GM12878 (cell line): ENCODE measurements at regions of chr18 and their contacts with region 1.

Region 1: DNA sequence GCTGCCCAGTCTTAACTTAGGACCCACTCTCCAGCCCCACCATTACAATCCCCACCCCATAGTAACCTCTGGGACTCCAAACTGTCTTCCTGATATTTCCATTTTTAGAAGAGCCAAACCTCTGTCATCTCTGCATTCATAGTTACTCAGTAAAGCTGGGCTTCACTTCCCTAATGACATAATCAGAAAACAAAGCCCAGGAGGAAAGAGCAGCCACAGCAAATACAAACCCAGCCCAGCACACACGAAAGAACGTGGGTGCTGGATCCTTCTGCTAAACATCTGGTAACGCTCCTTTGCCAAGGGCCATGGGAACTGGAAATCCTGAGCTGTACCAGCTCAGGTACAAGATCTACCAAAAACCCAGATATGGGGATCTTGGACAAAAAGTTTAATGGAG is 36.8 kb upstream of the RIOK3 start:
- DNase-seq: no peak
- ATAC-seq: peak; percentile 29; the same call in 2 of the 3 replicates
- H3K4me3 ChIP-seq: no peak overlapping the region
- H3K27ac ChIP-seq: no peak overlapping the region
- H3K4me1 ChIP-seq: no peaks in the 10 kb centered on the region; the same call in 1 of the 2 replicates
- H3K27me3 ChIP-seq: no peaks in the 10 kb centered on the region
- CTCF ChIP-seq: no peak
- EP300 ChIP-seq: no peak
- POLR2A ChIP-seq: no peak
- RAD21 ChIP-seq: no peak

Region 2: GRCh38 chr18:22800551-22800951 is 615.7 kb before region 1 on chr18:
- CTCF ChIA-PET with region 1: interaction called, 14 read pairs
- POLR2A ChIA-PET with region 1: no interaction called
- RAD21 ChIA-PET with region 1: interaction called, 17 read pairs
- SMC1A ChIA-PET with region 1: interaction called, 17 read pairs
- in situ Hi-C with region 1: no loop called
- intact Hi-C with region 1: loop called (anchors 5 kb)
- DNase-seq: no peak
- ATAC-seq: no peak
- H3K4me3 ChIP-seq: no peak overlapping the region
- H3K27ac ChIP-seq: no peak overlapping the region
- H3K4me1 ChIP-seq: no peaks in the 10 kb centered on the region; the same call in 1 of the 2 replicates
- H3K27me3 ChIP-seq: no peaks in the 10 kb centered on the region
- CTCF ChIP-seq: no peak
- EP300 ChIP-seq: no peak
- POLR2A ChIP-seq: no peak
- RAD21 ChIP-seq: no peak

Region 3: DNA sequence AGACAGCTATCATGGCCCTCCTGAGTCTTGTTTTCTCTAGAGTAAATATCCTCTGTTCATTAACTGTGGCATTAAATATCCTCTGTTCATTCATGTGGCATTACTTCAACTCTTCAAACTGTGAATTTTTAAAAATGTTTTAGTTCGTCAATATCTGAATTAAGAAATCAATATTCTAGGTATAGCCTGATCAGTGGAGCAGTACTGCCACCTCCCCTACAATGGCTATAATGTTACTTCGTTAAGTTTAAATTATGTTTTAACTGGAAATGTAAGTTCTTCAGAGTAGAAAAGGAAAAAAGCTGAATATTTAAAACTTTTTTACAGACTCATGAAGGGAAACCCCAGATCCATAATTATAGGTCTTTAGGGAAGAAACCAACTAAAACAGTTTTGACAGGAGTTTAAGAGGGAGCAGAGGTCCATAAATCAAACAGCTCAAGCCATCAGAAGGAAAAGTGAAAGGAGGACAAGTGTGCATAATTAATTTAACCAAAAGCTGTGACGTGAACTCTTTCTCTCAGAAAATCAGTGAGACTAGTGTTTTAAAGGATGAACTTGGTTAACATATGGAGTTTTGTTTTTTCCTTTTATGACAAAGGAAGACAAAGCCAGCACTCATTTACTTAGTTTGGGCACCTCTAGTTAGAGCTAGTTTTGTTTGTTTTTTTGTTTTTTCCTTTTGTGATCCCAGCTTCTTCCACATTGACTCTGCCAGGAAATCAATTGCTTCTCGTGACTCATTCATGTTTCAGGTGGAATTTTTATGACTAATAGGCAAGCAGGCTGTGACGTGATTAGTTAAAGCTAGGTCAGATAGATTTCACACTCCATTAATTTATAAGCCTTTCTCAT is 438.2 kb before region 1 on chr18:
- CTCF ChIA-PET with region 1: interaction called, 12 read pairs
- POLR2A ChIA-PET with region 1: no interaction called
- RAD21 ChIA-PET with region 1: interaction called, 3 read pairs
- SMC1A ChIA-PET with region 1: interaction called, 3 read pairs
- in situ Hi-C with region 1: no loop called
- intact Hi-C with region 1: no loop called
- DNase-seq: no peak
- ATAC-seq: peak; percentile 82
- H3K4me3 ChIP-seq: no peak overlapping the region
- H3K27ac ChIP-seq: peak overlapping the region; percentile 37; the same call in 1 of the 2 replicates
- H3K4me1 ChIP-seq: no peaks in the 10 kb centered on the region
- H3K27me3 ChIP-seq: no peaks in the 10 kb centered on the region
- CTCF ChIP-seq: no peak; a peak in 1 of 6 replicates
- EP300 ChIP-seq: no peak
- POLR2A ChIP-seq: no peak
- RAD21 ChIP-seq: peak; percentile 5; the same call in 1 of the 2 replicates

Region 4: DNA sequence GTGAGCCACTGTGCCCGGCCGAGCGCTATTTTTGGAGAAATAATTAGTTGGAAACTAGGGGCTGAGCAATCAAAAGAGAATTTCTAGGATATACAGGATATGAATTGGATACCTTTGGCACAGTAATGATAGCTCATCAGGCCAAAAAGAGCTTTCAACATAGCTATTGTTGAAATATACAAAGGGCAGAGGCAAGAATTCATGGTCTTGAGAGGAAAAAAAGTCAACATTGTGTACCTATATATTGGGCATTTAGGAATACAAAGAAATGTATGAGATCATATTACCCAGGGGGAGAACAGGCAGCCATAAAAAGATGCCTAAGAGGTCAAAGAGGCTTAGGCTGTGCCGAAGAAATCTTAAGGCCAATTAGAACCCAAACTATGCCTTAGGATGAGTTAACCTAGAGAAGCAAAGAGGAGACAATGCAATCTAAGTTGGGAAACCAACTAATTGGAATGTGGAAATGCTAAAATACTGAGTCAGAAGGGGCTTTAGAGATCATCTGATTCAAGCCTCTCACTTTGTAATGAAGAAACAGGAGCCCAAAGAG is 384.2 kb before region 1 on chr18:
- CTCF ChIA-PET with region 1: interaction called, 14 read pairs
- POLR2A ChIA-PET with region 1: no interaction called
- RAD21 ChIA-PET with region 1: interaction called, 4 read pairs
- SMC1A ChIA-PET with region 1: interaction called, 12 read pairs
- in situ Hi-C with region 1: no loop called
- intact Hi-C with region 1: loop called (anchors 5 kb)
- DNase-seq: no peak
- ATAC-seq: no peak
- H3K4me3 ChIP-seq: no peak overlapping the region
- H3K27ac ChIP-seq: no peak overlapping the region
- H3K4me1 ChIP-seq: no peaks in the 10 kb centered on the region
- H3K27me3 ChIP-seq: no peaks in the 10 kb centered on the region
- CTCF ChIP-seq: no peak
- EP300 ChIP-seq: no peak
- POLR2A ChIP-seq: no peak
- RAD21 ChIP-seq: no peak

Region 5: DNA sequence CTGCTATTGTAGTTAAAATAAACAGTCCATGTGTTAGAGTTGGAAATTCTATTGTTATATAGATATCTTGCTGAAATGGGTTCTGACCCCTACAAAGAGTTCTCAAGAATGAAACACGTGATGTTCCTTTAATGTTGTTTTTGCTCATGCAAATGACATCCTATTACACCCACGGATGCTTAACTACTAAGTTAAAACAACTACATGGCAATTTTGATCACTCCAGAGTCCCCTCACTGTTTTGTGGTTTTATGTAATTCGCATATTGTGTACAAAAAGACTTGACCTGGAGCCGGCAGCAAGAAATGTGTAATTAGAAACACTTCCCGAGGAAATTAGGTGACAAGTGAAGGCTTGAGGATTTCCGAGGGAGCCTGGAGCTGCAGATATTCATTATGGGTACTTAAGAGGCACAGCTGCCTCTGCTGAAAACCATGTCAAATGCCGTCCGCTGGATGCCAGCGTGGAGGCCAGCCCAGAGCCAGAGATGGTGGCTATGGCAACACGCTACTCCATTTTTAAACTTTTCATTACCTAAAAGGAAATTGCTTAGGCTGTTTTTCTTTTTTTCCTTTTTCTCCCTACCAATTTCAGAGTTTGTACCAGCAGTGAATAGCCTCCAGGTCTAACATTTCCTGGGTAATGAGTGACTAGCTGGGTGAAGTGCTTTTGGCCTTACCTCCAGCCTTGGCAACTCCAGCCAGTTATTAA is 302.0 kb before region 1 on chr18:
- CTCF ChIA-PET with region 1: no interaction called
- POLR2A ChIA-PET with region 1: no interaction called
- RAD21 ChIA-PET with region 1: no interaction called
- SMC1A ChIA-PET with region 1: no interaction called
- in situ Hi-C with region 1: no loop called
- intact Hi-C with region 1: no loop called
- DNase-seq: no peak
- ATAC-seq: no peak
- H3K4me3 ChIP-seq: no peak overlapping the region
- H3K27ac ChIP-seq: no peak overlapping the region
- H3K4me1 ChIP-seq: no peaks in the 10 kb centered on the region
- H3K27me3 ChIP-seq: no peaks in the 10 kb centered on the region; a peak in 1 of 4 replicates
- CTCF ChIP-seq: no peak
- EP300 ChIP-seq: no peak
- POLR2A ChIP-seq: no peak
- RAD21 ChIP-seq: no peak

Region 6: DNA sequence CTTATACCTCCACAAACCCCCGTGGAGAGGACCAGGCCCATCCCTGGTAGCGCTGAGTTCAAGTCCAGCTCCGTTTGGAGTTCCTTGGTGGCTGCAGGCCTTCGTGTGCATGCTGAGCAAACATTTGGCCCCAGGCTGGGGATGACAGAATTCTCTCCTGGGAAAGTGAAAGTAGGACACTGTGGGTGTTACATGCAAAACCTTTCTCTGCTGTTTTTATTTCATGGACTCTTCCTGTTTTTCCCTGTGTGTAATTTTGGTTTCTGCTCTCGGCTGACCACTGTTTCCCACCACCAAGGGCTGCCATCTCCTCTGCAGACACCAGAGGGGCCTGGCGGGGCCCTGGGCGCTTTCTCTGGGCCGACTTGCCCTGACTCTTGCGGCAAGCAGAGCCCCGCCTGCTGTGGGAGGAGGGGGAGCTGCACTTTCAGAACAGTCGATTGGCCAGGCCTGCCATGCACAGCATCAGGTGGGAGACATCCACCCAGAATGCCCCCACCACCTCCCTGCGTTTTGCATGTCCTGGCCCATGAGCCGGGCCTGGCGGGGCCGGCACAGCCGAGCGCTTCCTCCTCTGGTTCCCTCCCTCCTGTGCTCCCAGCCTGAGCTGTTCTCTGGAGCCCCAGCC is 178.7 kb before region 1 on chr18:
- CTCF ChIA-PET with region 1: interaction called, 8 read pairs
- POLR2A ChIA-PET with region 1: no interaction called
- RAD21 ChIA-PET with region 1: interaction called, 4 read pairs
- SMC1A ChIA-PET with region 1: interaction called, 3 read pairs
- in situ Hi-C with region 1: no loop called
- intact Hi-C with region 1: loop called (anchors 5 kb)
- DNase-seq: peak; percentile 81
- ATAC-seq: peak; percentile 86
- H3K4me3 ChIP-seq: no peak overlapping the region
- H3K27ac ChIP-seq: peak overlapping the region; percentile 76
- H3K4me1 ChIP-seq: peaks cover 50% of the 10 kb centered on the region
- H3K27me3 ChIP-seq: no peaks in the 10 kb centered on the region
- CTCF ChIP-seq: peak; percentile 21 to 55 (median 45); a peak in 4 of 6 replicates
- EP300 ChIP-seq: peak; percentile 56 to 87; a peak in 3 of 4 replicates
- POLR2A ChIP-seq: no peak
- RAD21 ChIP-seq: peak; percentile 63

Region 7: DNA sequence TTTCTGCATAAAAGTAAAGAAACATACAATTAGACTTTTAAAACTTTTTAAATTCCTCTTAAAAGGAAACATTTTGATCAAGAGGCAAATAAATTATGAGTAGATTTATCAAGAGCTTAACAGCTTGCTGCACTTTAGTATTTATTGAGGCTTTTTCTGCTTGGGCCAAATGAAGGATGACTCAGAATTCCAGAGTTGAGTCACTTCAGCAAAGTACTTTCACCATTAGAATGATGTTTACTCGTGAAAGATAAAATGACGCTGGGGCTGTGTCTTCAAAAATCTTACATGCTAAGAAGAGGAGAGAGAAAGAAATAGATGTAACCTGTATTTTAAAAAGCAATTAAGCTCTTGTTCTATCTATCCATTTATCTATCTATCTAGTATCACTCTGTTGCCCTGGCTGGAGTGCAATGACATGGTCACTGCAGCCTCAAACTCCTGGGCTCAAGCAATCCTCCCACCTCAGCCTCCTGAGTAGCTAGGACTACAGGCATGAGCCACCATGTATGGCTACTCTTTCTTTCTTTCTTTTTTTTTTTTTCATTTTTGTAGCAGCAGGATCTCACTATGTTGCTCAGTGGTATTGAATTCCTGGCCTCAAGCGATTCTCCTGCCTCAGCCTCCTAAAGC is 38.5 kb before region 1 on chr18:
- CTCF ChIA-PET with region 1: interaction called, 23 read pairs
- POLR2A ChIA-PET with region 1: no interaction called
- RAD21 ChIA-PET with region 1: interaction called, 5 read pairs
- SMC1A ChIA-PET with region 1: interaction called, 12 read pairs
- in situ Hi-C with region 1: no loop called
- intact Hi-C with region 1: no loop called
- DNase-seq: peak; percentile 39
- ATAC-seq: peak; percentile 88
- H3K4me3 ChIP-seq: no peak overlapping the region
- H3K27ac ChIP-seq: no peak overlapping the region
- H3K4me1 ChIP-seq: peaks cover 2% of the 10 kb centered on the region; the same call in 1 of the 2 replicates
- H3K27me3 ChIP-seq: no peaks in the 10 kb centered on the region
- CTCF ChIP-seq: no peak
- EP300 ChIP-seq: 0 out of 4 replicates have a peak, but pooled peaks of 1 of the 2 experiments have one; percentile 31
- POLR2A ChIP-seq: no peak
- RAD21 ChIP-seq: no peak

Region 8: DNA sequence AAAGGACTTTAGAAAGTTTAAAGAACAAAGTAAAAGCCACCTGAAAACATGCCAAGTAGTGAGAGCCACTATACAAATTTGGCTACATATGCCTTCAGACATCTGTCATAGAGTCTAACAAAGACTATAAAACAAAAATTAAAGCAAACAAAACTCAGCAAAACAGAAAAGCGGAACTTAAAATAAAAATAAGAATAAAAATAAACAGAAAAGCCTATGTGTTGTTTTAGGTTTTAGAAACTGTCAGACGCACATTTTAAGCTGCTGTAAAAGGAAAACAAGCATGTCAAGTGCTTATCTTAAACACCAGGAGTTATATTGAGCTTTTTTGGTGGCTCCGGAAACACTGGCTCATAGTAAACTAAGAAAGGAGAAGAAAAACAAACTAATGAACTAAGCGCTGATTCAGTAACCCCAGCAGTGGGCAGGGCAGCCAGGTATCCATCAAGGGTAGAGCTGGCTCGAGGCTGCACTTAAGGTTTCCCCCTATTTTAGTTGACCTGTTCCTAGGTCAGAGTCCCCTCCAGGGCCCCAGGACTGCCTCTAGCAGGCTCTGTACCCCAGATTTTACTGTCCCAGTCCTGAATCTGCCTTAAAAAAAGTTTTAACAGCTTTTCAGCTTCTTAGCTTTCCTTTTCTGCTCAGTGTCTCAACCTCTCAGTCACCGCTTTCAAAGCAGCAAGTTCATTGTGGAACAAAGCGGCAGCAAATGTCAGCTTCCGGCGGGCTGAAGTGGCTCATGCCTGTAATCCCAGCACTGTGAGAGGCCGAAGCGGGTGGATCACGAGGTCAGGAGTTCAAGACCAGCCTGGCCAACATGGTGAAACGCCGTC is 71.7 kb after region 1 on chr18:
- CTCF ChIA-PET with region 1: interaction called, 4 read pairs
- POLR2A ChIA-PET with region 1: no interaction called
- RAD21 ChIA-PET with region 1: interaction called, 4 read pairs
- SMC1A ChIA-PET with region 1: interaction called, 10 read pairs
- in situ Hi-C with region 1: no loop called
- intact Hi-C with region 1: no loop called
- DNase-seq: peak; percentile 62
- ATAC-seq: peak; percentile 92
- H3K4me3 ChIP-seq: peak overlapping the region; percentile 70
- H3K27ac ChIP-seq: peak overlapping the region; percentile 93
- H3K4me1 ChIP-seq: peaks cover 10% of the 10 kb centered on the region
- H3K27me3 ChIP-seq: no peaks in the 10 kb centered on the region
- CTCF ChIP-seq: no peak
- EP300 ChIP-seq: no peak
- POLR2A ChIP-seq: peak; percentile 43
- RAD21 ChIP-seq: no peak

Region 9: GRCh38 chr18:23967321-23968089 is 551.2 kb after region 1 on chr18:
- CTCF ChIA-PET with region 1: no interaction called
- POLR2A ChIA-PET with region 1: no interaction called
- RAD21 ChIA-PET with region 1: no interaction called
- SMC1A ChIA-PET with region 1: no interaction called
- in situ Hi-C with region 1: no loop called
- intact Hi-C with region 1: no loop called
- DNase-seq: peak; percentile 53
- ATAC-seq: peak; percentile 72
- H3K4me3 ChIP-seq: 0 out of 2 replicates have a peak overlapping the region, but pooled peaks have one; percentile 9
- H3K27ac ChIP-seq: no peak overlapping the region; the same call in 1 of the 2 replicates
- H3K4me1 ChIP-seq: peaks cover 37% of the 10 kb centered on the region
- H3K27me3 ChIP-seq: no peaks in the 10 kb centered on the region
- CTCF ChIP-seq: no peak
- EP300 ChIP-seq: no peak
- POLR2A ChIP-seq: no peak
- RAD21 ChIP-seq: no peak